ENCODE measurements at regions of chr1 and their contacts with region 1.

Region 1: DNA sequence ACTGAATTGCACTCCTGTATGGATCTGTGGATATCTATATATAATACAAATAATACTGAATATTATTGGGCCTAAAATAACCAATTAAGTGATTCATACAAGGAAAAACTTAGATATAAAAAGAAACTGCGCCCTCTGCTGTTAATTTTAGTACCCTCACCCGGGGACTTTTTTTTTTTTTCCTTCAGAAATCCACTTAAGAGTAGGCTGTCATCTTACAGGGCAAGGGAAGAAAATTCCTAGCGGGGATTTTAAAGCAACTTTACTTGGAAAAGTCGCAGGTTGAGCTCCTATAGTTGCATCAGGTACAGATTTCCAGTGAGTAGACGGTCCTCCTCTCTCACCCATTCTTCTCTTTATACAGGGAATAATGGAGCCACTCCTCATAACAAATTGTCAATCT is 1.3 kb downstream of the NTNG1 start:
- DNase-seq: peak; percentile 10
- H3K4me3 Mint-ChIP-seq: peak overlapping the region; percentile 72
- H3K27ac Mint-ChIP-seq: no peak overlapping the region
- H3K4me1 Mint-ChIP-seq: peaks cover 16% of the 10 kb centered on the region
- H3K27me3 Mint-ChIP-seq: peaks cover 24% of the 10 kb centered on the region
- CTCF ChIP-seq: no peak

Region 2: DNA sequence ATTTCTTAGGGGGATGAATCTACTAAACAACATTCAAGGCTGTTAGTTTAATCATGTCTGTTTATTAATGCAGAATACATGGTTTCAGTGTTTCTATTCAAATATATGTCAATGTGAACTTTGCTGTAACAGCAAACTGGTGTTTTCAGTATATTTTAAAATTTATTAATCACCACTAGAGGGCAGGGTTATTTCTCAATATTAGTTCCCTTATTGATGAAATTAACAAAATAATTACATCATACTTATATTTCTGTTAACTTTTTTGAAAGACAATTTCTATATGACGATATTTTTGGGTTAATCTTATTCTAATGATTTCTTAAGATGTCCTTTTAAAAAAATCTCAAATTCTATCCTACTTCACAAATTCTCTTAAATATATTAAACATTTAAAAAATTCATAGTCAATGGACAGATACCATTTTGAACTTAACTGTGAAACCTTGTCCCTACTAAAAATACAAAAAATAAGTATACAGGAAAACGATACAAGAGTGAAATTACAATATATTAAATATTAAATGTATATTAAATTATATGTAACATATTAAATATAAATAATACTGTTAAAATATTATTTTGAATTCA is 1119.7 kb before region 1 on chr1:
- CTCF ChIA-PET with region 1: no interaction called
- intact Hi-C with region 1: loop called (anchors 2 kb)
- DNase-seq: no peak
- H3K4me3 Mint-ChIP-seq: no peak overlapping the region
- H3K27ac Mint-ChIP-seq: no peak overlapping the region
- H3K4me1 Mint-ChIP-seq: no peaks in the 10 kb centered on the region
- H3K27me3 Mint-ChIP-seq: no peaks in the 10 kb centered on the region
- CTCF ChIP-seq: no peak

Region 3: GRCh38 chr1:106620521-106620954 is 521.6 kb before region 1 on chr1:
- CTCF ChIA-PET with region 1: no interaction called
- intact Hi-C with region 1: loop called (anchors 5 kb)
- DNase-seq: peak; percentile 44
- H3K4me3 Mint-ChIP-seq: no peak overlapping the region
- H3K27ac Mint-ChIP-seq: no peak overlapping the region
- H3K4me1 Mint-ChIP-seq: peaks cover 9% of the 10 kb centered on the region
- H3K27me3 Mint-ChIP-seq: no peaks in the 10 kb centered on the region
- CTCF ChIP-seq: no peak

Region 4: GRCh38 chr1:106768501-106768900 is 373.6 kb before region 1 on chr1:
- CTCF ChIA-PET with region 1: no interaction called
- intact Hi-C with region 1: loop called (anchors 10 kb)
- DNase-seq: no peak
- H3K4me3 Mint-ChIP-seq: peak overlapping the region; percentile 51
- H3K27ac Mint-ChIP-seq: peak overlapping the region; percentile 78
- H3K4me1 Mint-ChIP-seq: peaks cover 17% of the 10 kb centered on the region
- H3K27me3 Mint-ChIP-seq: no peaks in the 10 kb centered on the region
- CTCF ChIP-seq: no peak

Region 5: DNA sequence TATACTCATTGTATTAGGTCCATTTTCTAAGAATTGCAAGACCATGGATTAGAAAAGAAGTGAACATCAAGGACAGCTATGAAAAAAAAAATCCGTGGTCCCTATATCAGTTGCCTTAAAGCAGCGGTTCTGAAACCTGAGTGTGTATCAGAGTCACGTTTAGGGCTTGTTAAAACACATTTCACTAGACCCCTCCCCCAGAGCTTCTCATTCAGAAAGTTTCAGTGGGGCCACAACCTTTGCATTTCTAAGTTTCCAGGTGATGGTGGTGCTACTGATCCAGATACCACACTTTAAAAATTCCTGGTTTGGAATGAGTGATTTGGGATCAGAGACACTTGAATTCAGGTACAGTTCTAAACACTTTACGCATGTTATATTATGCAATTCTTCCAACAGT is 181.7 kb before region 1 on chr1:
- CTCF ChIA-PET with region 1: no interaction called
- intact Hi-C with region 1: loop called (anchors 10 kb)
- DNase-seq: no peak
- H3K4me3 Mint-ChIP-seq: no peak overlapping the region
- H3K27ac Mint-ChIP-seq: no peak overlapping the region
- H3K4me1 Mint-ChIP-seq: peaks cover 12% of the 10 kb centered on the region
- H3K27me3 Mint-ChIP-seq: no peaks in the 10 kb centered on the region
- CTCF ChIP-seq: no peak

Region 6: GRCh38 chr1:107056426-107057196 is 85.5 kb before region 1 on chr1 and contains the start of gene PRMT6:
- CTCF ChIA-PET with region 1: interaction called, 3 read pairs
- intact Hi-C with region 1: loop called (anchors 5 kb)
- DNase-seq: peak; percentile 77
- H3K4me3 Mint-ChIP-seq: peak within 1 kb of the TSS; percentile 85
- H3K27ac Mint-ChIP-seq: peak within 1 kb of the TSS; percentile 62
- H3K4me1 Mint-ChIP-seq: no peaks in the 10 kb centered on the region
- H3K27me3 Mint-ChIP-seq: no peaks in the 10 kb centered on the region
- CTCF ChIP-seq: no peak
- total RNA-seq, gene PRMT6: 15.4 and 20.9 TPM in 2 replicates

Region 7: DNA sequence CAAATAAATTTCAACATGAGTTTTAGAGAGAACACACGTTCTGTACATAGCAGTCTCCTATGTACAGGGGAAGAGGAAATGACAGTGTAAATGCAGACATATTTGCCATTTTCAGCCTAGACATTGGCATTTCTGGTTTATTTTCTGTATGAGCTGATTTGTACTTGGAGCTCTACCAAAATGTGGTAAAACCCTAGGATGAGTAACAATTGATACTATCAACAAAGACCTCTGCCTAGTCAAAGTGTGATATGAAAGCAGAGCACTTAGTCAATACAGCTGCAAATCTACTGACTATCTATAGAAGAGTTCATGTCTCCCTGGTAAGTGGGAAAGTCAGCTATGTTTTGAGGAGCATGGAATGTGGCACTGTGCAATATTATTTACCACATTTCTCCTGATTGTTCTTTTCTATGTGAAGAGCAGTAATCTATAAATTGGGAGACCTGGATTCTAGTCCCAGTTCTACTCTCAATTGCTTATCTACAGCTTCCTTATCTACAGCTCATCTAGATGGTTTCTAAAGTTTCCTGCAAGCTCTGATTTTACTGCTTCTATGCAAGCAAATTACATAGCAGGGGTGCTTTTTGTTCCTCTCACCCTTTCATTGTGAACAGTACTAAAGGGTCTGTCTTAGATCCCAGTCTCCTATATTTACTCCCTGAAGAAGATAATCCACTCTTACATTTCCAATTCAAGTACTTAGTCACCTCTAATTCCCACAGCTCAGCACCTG is 332.9 kb after region 1 on chr1:
- CTCF ChIA-PET with region 1: no interaction called
- intact Hi-C with region 1: no loop called
- DNase-seq: no peak
- H3K4me3 Mint-ChIP-seq: no peak overlapping the region
- H3K27ac Mint-ChIP-seq: no peak overlapping the region
- H3K4me1 Mint-ChIP-seq: no peaks in the 10 kb centered on the region
- H3K27me3 Mint-ChIP-seq: peaks cover 25% of the 10 kb centered on the region
- CTCF ChIP-seq: no peak

Measured in Calu3 (cell line).